Transverse colon (tissue), 4 donors: ENCODE measurements at regions of chr2 and their contacts with region 1.

Region 1: DNA sequence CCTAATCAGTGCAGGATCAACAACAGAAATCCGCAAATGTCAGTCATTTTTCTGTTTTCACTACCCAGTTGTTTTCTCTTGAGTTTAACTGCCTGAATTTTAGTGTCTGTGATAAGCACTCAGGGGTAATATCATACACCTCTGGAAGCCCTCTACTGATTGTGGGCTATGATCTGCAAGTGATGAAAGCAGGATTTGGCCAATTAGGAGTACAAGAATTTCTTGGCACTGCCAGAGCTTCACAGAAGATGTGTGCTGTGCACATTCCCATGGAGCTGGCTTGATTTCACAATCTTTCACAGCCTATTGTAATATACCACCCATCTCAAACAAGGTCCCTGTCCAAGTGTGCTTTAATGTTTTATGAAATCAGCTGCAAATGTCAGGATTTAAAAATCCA is 27.3 kb upstream of the TDRD15 start:
- DNase-seq: no peak
- H3K4me3 ChIP-seq: no peak overlapping the region
- H3K27ac ChIP-seq: no peak overlapping the region
- H3K4me1 ChIP-seq: no peaks in the 10 kb centered on the region
- H3K27me3 ChIP-seq: no peaks in the 10 kb centered on the region
- CTCF ChIP-seq: no peak
- EP300 ChIP-seq: no peak
- POLR2A ChIP-seq: no peak

Region 2: GRCh38 chr2:19109518-19109917 is 1986.9 kb before region 1 on chr2:
- in situ Hi-C with region 1: no loop called
- intact Hi-C with region 1: loop called (anchors 5 kb)
- DNase-seq: no peak
- H3K4me3 ChIP-seq: no peak overlapping the region
- H3K27ac ChIP-seq: no peak overlapping the region
- H3K4me1 ChIP-seq: no peaks in the 10 kb centered on the region
- H3K27me3 ChIP-seq: no peaks in the 10 kb centered on the region
- CTCF ChIP-seq: no peak
- EP300 ChIP-seq: no peak
- POLR2A ChIP-seq: no peak

Region 3: GRCh38 chr2:21047141-21048009 is 49.1 kb before region 1 on chr2:
- in situ Hi-C with region 1: no loop called
- intact Hi-C with region 1: no loop called
- DNase-seq: no peak
- H3K4me3 ChIP-seq: no peak overlapping the region
- H3K27ac ChIP-seq: no peak overlapping the region
- H3K4me1 ChIP-seq: peaks cover 0 to 8% (median 3%) of the 10 kb centered on the region in 4 donors
- H3K27me3 ChIP-seq: peaks cover 18% of the 10 kb centered on the region
- CTCF ChIP-seq: no peak
- EP300 ChIP-seq: no peak
- POLR2A ChIP-seq: no peak

Region 4: GRCh38 chr2:21404827-21405625 is 308.6 kb after region 1 on chr2:
- in situ Hi-C with region 1: no loop called
- intact Hi-C with region 1: no loop called
- DNase-seq: no peak
- H3K4me3 ChIP-seq: no peak overlapping the region
- H3K27ac ChIP-seq: no peak overlapping the region
- H3K4me1 ChIP-seq: no peaks in the 10 kb centered on the region
- H3K27me3 ChIP-seq: no peaks in the 10 kb centered on the region
- CTCF ChIP-seq: no peak
- EP300 ChIP-seq: no peak
- POLR2A ChIP-seq: no peak